Heart right ventricle (tissue), 16 donors: ENCODE measurements at regions of chr20 and their contacts with region 1.

Region 1: DNA sequence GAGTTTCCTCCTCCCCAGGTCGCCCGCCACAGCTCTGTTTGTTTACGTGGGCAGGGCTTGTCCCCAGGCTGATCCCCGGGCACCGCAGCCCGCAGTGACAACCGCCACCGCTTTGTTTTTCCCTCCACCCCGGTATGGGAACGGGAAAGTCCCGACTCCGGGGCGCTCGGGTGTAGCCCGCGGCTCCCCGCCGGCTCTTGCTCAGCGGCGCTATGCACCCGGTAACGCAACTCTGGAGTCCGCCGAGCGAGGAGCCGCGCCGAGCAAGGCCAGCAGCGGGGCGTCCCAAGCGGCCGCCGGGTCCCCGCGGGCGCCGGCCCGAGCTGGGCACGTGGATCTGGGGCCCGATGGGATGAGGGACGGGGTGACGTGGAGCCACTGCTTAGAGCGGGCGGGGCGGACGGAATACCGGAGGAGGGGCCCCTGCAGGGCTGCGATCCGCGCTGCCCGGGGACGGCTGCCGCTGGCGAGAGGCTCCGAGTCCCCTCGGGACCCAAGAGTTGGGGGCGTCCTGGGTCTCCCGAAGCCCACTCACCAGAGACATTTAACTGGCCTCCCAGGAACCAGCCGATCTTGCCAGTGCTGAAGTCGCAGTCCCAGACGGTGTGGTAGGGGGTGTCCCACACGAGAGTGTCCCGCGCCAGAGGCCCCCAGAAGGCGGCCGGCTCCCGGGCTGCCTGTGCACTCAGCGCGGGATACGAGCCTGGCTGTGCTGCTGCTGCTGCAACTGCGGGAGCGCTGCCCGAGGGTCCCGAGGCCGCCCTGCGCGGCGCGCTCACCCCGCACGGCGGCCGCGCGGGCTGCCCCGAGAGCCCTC is 497 bp downstream of the ACSS1 start:
- DNase-seq: peak; percentile 81 to 84
- ATAC-seq: peak; percentile 68 to 84 (median 78)
- H3K4me3 ChIP-seq: peak overlapping the region; percentile 68 to 98 (median 89)
- H3K27ac ChIP-seq: peak overlapping the region; percentile 93 to 99 (median 98)
- H3K4me1 ChIP-seq: peaks cover 25 to 65% (median 59%) of the 10 kb centered on the region in 9 donors
- H3K27me3 ChIP-seq: no peaks in the 10 kb centered on the region
- CTCF ChIP-seq: peak in 2 of 9 donors; percentile 5 to 12

Region 2: GRCh38 chr20:24992487-24993205 is 64.8 kb before region 1 on chr20 and contains the start of gene APMAP:
- intact Hi-C with region 1: loop called in 2 of 10 experiments (anchors 1 to 2 kb)
- DNase-seq: peak; percentile 96 to 97
- ATAC-seq: peak; percentile 95 to 97 (median 96)
- H3K4me3 ChIP-seq: peak within 1 kb of the TSS; percentile 53 to 96 (median 87)
- H3K27ac ChIP-seq: peak within 1 kb of the TSS; percentile 71 to 96 (median 93)
- H3K4me1 ChIP-seq: peaks cover 5 to 78% (median 49%) of the 10 kb centered on the region in 9 donors
- H3K27me3 ChIP-seq: no peaks in the 10 kb centered on the region
- CTCF ChIP-seq: no peak
- total RNA-seq, gene APMAP: 22.5 to 44.6 (median 33.1) TPM

Region 3: DNA sequence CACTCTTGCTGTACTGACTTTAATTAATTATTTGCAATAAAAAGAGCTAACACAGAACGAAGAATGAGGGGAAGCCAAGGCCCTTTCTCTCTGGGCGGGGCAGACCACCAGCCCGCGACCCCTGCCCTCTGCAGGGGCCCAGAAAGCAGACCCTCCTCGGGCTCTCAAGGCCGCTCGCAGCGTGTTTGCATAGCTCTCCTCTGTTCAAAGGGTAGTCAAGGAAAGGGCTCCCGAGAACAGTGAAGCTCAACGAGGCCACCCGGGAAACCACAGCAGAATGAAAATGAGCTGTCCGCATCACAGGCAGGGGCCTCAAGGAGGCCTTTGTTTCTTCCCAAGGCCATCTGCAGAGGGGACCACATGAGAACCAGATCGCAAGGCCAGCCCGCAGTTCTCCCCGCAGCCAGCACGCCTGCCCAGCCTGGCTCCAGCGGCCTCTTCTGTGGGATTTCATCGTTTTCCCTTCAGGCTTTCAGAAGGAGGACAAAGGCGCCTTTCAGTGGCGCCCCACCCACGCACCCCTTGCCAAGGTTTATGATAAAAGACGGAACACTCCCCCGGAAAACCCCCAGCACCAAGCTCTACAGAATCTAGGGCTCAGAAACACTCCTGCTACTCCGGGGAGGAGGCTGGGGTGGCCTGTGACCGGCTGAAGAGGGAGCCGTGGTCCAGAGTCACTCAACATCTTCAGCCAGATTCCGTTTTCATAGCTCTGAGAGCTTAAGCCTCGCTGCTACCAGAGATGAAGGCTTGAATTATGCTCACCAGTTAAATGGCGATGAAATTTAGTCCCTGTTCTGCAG is 24.8 kb before region 1 on chr20:
- intact Hi-C with region 1: loop called in 1 of 10 experiments (anchors 2 kb)
- DNase-seq: peak; percentile 65 to 72
- ATAC-seq: peak; percentile 66 to 88 (median 80)
- H3K4me3 ChIP-seq: peak overlapping the region in 4 of 10 donors; percentile 1 to 32 (median 16)
- H3K27ac ChIP-seq: peak overlapping the region; percentile 45 to 98 (median 78)
- H3K4me1 ChIP-seq: peaks cover 43 to 82% (median 56%) of the 10 kb centered on the region in 9 donors
- H3K27me3 ChIP-seq: no peaks in the 10 kb centered on the region
- CTCF ChIP-seq: peak in 3 of 9 donors; percentile 37 to 50 (median 39)

Region 4: DNA sequence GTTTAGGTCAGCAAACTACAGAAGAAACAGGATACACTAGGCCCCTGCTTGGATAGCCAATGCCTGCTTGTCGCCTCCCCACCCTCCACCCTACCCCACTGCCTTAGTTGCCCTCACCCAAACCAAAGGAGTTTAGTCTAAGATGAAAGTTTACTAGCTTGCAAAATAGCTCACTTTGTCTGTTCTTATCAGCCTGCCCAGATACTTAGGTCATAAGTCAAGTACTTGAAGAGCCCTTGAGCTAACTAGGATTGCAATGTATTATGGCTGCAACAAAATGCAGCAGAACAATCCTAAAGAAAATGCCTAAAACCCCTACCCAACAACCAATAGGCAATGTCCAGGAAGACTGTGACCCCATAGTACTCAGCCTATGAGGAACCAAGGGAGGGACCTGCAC is 130.8 kb after region 1 on chr20:
- intact Hi-C with region 1: loop called in 2 of 10 experiments (anchors 5 to 10 kb)
- DNase-seq: no peak
- ATAC-seq: no peak
- H3K4me3 ChIP-seq: no peak overlapping the region
- H3K27ac ChIP-seq: no peak overlapping the region
- H3K4me1 ChIP-seq: peaks cover 0 to 24% (median 8%) of the 10 kb centered on the region in 9 donors
- H3K27me3 ChIP-seq: peaks cover 0 to 8% (median 0%) of the 10 kb centered on the region in 7 donors
- CTCF ChIP-seq: no peak

Region 5: GRCh38 chr20:25247956-25248785 is 190.7 kb after region 1 on chr20 and contains the start of gene PYGB:
- intact Hi-C with region 1: loop called in 1 of 10 experiments (anchors 5 kb)
- DNase-seq: peak; percentile 71 to 79
- ATAC-seq: peak; percentile 66 to 94 (median 87)
- H3K4me3 ChIP-seq: peak within 1 kb of the TSS; percentile 76 to 96 (median 93)
- H3K27ac ChIP-seq: peak within 1 kb of the TSS; percentile 92 to 98 (median 96)
- H3K4me1 ChIP-seq: peaks cover 0 to 61% (median 39%) of the 10 kb centered on the region in 9 donors
- H3K27me3 ChIP-seq: no peaks in the 10 kb centered on the region
- CTCF ChIP-seq: no peak
- total RNA-seq, gene PYGB: 203 to 462 (median 276) TPM